Activated CD4-positive, alpha-beta T cell treated with anti-CD3 and anti-CD28 coated beads, Interleukin-2, amount 10 ng/mL, durations not matched to agents 7 days and 5 days (primary cell): ENCODE measurements at regions of chr3 and their contacts with region 1.

Region 1: GRCh38 chr3:40476478-40477470 is at the start of gene ZNF619:
- DNase-seq: peak; percentile 56
- H3K4me3 Mint-ChIP-seq: peak within 1 kb of the TSS; percentile 75
- H3K27ac Mint-ChIP-seq: peak within 1 kb of the TSS; percentile 87
- H3K4me1 Mint-ChIP-seq: peaks cover 38% of the 10 kb centered on the region
- H3K27me3 Mint-ChIP-seq: no peaks in the 10 kb centered on the region
- total RNA-seq, gene ZNF619: 9.5 to 9.8 TPM

Region 2: DNA sequence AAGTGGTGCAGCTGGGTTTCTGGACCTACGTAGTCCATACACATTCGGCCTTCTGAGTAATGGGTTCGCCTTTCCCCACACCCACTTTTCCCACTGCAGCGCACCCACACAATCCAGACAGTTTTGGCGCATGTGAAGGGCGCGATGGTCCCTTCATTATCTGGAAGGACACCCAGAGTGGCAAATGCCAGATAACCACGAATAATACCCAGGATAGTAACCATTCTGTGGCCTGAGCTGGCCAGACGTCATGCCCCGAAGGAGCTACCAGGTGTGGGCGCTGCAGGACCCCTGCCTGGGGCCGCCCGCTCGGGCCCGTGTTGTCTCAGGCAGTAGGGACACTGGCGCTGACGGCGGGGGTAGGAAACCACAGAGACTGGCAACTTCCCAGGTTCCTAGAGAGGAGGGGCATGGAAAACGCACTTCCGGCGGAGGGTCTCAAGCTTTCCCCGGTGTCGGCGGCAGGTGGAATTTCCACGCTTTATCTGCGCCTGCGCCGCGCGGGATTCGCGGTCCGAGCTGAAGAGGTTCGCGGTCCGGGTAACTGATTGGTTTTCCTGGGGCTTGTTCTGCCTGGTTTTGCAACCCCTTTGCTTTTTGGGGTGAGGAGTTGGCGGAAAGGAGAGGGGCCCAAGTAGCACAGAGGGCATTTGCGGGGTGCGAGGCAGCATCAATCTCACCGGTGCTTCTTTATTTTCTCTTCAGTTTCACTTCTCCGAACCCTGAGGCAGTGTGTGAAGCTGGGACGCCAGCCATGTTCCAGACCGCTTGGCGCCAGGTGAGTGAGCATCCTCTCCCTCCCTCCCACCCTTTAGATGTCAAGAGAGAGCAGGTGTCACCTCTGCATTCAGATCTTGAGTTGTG is 29.1 kb after region 1 on chr3 and contains the start of gene ZNF620:
- CTCF ChIA-PET with region 1: interaction called, 10 read pairs
- POLR2A ChIA-PET with region 1: no interaction called
- DNase-seq: peak; percentile 45
- H3K4me3 Mint-ChIP-seq: peak within 1 kb of the TSS; percentile 93
- H3K27ac Mint-ChIP-seq: peak within 1 kb of the TSS; percentile 96
- H3K4me1 Mint-ChIP-seq: peaks cover 39% of the 10 kb centered on the region
- H3K27me3 Mint-ChIP-seq: peaks cover 3% of the 10 kb centered on the region
- total RNA-seq, gene ZNF620: 5.5 to 5.6 TPM